ENCODE measurements at regions of chr2 and their contacts with region 1.

Region 1: DNA sequence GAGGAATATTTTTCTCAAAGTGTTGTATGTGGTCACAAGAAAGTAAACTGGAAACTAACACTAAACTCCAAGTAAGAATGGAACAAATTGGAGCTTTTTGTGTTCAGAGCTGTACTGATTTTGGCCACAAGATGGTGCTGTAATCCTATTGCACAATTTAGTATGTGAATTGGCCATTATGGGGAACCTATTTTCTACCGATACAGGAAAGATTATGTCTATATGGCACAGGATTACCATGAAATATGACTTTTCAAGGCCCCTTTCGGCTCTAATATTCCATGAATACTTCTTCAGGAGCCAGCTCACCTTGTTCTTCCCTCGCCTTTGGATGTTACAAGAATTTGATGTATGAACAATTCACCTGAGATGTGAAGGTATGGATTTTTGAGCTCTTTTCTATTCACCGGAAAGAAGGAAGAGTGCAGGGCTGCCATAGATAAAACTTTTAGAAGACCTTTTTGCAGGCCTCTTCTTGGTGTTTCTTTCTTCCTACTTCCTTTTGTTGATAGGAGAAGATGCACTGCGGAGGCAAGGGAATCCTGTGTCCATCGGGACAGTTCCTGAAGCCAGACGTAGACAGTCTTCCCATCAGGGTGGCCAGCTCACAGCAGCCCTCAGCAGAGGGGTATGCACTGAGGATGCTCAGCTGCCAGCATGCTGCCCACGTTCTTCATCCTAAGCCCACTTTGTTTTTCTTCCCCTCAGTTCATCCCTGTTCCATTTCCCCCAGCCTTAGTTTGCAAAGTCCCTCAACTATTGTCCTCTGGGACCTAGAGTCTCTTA is 13.3 kb downstream of the MRPL44 start:
- DNase-seq: no peak
- ATAC-seq: peak; percentile 64
- H3K4me3 Mint-ChIP-seq: no peak overlapping the region
- H3K27ac Mint-ChIP-seq: no peak overlapping the region
- H3K4me1 Mint-ChIP-seq: peaks cover 3% of the 10 kb centered on the region
- H3K27me3 Mint-ChIP-seq: no peaks in the 10 kb centered on the region
- CTCF ChIP-seq: peak; percentile 90

Region 2: DNA sequence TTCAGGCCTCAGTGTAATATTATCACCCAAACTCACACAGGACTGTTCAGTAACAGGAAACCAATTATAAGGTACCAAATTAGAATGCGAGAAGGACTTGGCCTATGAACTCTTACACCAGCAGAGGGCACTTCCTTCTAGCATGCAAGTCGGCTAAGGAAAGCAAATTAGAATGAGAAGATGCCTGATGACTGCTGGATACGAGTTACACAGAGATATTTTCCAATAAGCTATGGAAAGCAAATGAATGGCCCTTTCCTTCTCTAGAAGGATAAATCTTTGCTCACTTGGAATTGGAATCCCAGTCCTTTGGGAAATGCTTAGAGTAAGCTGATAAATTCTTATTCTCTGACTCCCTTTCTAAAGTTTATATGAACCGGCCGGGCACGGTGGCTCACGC is 243.0 kb before region 1 on chr2:
- CTCF ChIA-PET with region 1: interaction called, 13 read pairs
- POLR2A ChIA-PET with region 1: no interaction called
- intact Hi-C with region 1: no loop called
- DNase-seq: no peak
- ATAC-seq: peak; percentile 65
- H3K4me3 Mint-ChIP-seq: no peak overlapping the region
- H3K27ac Mint-ChIP-seq: no peak overlapping the region
- H3K4me1 Mint-ChIP-seq: no peaks in the 10 kb centered on the region
- H3K27me3 Mint-ChIP-seq: no peaks in the 10 kb centered on the region
- CTCF ChIP-seq: peak; percentile 20

Region 3: DNA sequence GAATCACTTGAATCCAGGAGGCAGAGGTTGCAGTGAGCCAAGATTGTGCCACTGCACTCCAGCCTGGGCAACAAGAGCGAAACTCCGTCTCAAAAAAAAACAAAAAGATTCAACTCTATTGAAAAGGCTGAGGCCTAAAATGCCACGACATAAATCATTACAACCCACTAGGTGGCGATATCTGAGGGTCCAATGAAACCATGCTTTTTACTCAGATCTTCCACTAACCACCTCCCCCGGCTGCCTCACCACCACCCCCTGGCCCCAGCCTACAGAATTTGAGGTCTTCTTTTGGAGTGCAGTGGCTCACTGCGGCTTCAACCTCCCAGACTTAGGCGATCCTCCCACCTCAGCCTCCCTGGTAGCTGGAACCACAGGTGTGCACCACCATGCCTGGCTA is 190.7 kb before region 1 on chr2:
- CTCF ChIA-PET with region 1: interaction called, 8 read pairs
- POLR2A ChIA-PET with region 1: no interaction called
- intact Hi-C with region 1: loop called (anchors 1 kb)
- DNase-seq: peak; percentile 21
- ATAC-seq: peak; percentile 90
- H3K4me3 Mint-ChIP-seq: no peak overlapping the region
- H3K27ac Mint-ChIP-seq: peak overlapping the region; percentile 41
- H3K4me1 Mint-ChIP-seq: peaks cover 21% of the 10 kb centered on the region
- H3K27me3 Mint-ChIP-seq: no peaks in the 10 kb centered on the region
- CTCF ChIP-seq: no peak

Region 4: GRCh38 chr2:224369028-224369632 is 398.6 kb after region 1 on chr2:
- CTCF ChIA-PET with region 1: interaction called, 4 read pairs
- POLR2A ChIA-PET with region 1: no interaction called
- intact Hi-C with region 1: loop called (anchors 1 kb)
- DNase-seq: no peak
- ATAC-seq: no peak
- H3K4me3 Mint-ChIP-seq: no peak overlapping the region
- H3K27ac Mint-ChIP-seq: no peak overlapping the region
- H3K4me1 Mint-ChIP-seq: no peaks in the 10 kb centered on the region
- H3K27me3 Mint-ChIP-seq: no peaks in the 10 kb centered on the region
- CTCF ChIP-seq: peak; percentile 48

Measured in activated B cell treated with CpG ODN at 0.5 μM for 24 hours (primary cell).